Activated T-helper 1 cell treated with anti-CD3 and anti-CD28 coated beads, Interleukin-12 subunit alpha, Interleukin-12 subunit beta, Interleukin-2, Interleukin-4 antibody, amounts not matched to agents 30 ng/mL and 10 ng/mL and 1 ng/mL, durations not matched to agents 14 hours and 24 hours and 36 hours (primary cell): ENCODE measurements at regions of chr6 and their contacts with region 1.

Region 1: GRCh38 chr6:169701954-169702839 is at the starts of genes C6orf120 and WDR27:
- DNase-seq: peak; percentile 96
- H3K4me3 Mint-ChIP-seq: peak within 1 kb of the TSS; percentile 91
- H3K27ac Mint-ChIP-seq: peak within 1 kb of the TSS; percentile 91
- H3K4me1 Mint-ChIP-seq: peaks cover 46% of the 10 kb centered on the region
- H3K27me3 Mint-ChIP-seq: no peaks in the 10 kb centered on the region
- total RNA-seq, gene C6orf120: 22.6 and 25.5 TPM in 2 replicates
- total RNA-seq, gene WDR27: 20.1 and 26.8 TPM in 2 replicates

Region 2: DNA sequence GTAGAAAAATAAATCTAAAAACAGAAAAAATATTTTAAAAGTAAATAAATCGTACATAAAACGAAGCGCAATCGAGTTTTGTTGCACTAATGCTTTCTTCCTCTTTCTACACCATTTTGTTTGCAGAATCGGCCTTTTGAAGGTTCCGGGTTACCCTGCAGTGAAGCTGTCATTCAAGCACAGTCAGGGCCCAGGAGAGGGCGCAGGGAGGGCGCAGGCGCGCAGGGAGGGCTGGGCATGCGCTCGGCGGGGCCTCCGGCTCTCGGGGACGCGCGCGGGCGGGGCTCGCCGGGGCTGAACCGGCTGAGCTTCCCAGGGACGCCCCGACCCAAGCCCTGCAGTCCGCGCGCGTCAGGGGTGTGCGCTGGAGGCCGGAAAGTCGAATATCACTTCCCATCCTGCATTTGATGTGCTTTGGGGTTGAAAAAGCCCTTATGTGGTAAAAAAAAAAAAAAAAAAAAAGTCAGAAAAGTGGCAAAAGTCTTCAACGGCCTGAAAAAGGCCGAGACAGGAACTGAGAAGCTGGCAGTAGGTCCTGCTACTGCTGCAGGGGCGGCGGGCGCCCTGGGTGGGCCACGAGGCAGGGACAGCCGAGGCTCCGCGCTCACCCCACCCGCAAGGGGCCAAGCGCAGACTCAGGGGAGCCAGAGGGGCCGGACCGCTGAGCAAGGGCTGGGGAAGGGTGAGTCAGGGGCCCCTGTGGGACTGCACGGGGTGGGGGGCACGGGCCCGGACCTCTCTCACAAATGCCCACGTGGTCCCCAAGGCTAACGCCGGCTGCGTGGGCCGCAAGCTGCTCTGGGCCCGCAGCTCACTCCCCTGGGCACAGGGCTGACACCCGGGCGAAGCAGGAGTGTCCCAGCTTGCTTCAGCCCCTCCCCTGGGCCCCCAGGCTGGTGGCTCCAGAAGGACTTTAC is 489.0 kb before region 1 on chr6:
- intact Hi-C with region 1: loop called (anchors 1 kb)
- DNase-seq: peak; percentile 87
- H3K4me3 Mint-ChIP-seq: peak overlapping the region; percentile 43
- H3K27ac Mint-ChIP-seq: peak overlapping the region; percentile 32
- H3K4me1 Mint-ChIP-seq: peaks cover 7% of the 10 kb centered on the region
- H3K27me3 Mint-ChIP-seq: peaks cover 5% of the 10 kb centered on the region

Region 3: DNA sequence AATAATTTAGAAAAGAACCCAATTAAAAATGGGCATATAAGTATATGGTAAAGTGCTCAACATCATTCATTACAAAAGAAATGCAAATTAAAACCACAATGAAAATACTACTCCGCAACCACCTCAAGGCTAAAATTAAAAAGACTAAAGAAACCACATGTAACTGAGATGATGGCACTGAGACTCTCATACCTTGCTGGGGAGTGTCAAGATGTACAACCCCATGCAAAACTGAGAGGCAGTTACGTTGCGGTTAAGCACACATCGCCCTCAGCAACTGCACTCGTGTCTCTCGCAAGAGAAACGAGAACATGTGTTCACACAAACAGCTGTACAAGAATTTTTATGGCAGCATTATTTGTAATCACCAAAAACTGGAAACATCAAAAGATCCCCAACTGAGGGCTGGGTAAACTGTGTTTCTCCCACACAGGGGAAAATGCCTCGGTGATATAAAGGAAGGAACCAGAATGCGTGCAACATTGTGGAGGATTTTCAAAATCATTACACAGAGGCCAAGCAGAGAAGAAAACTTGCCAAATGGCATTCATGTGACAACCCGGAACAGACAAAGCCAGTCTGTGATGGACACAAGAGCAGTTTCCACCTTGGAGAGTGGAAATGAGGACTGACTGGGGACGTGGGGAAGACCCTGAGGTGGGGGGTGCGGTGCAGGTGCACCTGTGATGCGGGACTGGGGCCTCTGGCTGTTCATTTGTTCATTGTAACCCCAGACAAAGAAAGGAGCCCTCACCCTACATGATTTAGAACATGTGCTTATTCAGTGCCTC is 145.2 kb before region 1 on chr6:
- intact Hi-C with region 1: loop called (anchors 2 kb)
- DNase-seq: peak; percentile 13
- H3K4me3 Mint-ChIP-seq: peak overlapping the region; percentile 4
- H3K27ac Mint-ChIP-seq: peak overlapping the region; percentile 34
- H3K4me1 Mint-ChIP-seq: peaks cover 15% of the 10 kb centered on the region
- H3K27me3 Mint-ChIP-seq: peaks cover 20% of the 10 kb centered on the region

Region 4: GRCh38 chr6:169654598-169655391 is 47.4 kb before region 1 on chr6:
- intact Hi-C with region 1: loop called (anchors 1 kb)
- DNase-seq: peak; percentile 67
- H3K4me3 Mint-ChIP-seq: peak overlapping the region; percentile 87
- H3K27ac Mint-ChIP-seq: peak overlapping the region; percentile 44
- H3K4me1 Mint-ChIP-seq: no peaks in the 10 kb centered on the region
- H3K27me3 Mint-ChIP-seq: no peaks in the 10 kb centered on the region

Region 5: DNA sequence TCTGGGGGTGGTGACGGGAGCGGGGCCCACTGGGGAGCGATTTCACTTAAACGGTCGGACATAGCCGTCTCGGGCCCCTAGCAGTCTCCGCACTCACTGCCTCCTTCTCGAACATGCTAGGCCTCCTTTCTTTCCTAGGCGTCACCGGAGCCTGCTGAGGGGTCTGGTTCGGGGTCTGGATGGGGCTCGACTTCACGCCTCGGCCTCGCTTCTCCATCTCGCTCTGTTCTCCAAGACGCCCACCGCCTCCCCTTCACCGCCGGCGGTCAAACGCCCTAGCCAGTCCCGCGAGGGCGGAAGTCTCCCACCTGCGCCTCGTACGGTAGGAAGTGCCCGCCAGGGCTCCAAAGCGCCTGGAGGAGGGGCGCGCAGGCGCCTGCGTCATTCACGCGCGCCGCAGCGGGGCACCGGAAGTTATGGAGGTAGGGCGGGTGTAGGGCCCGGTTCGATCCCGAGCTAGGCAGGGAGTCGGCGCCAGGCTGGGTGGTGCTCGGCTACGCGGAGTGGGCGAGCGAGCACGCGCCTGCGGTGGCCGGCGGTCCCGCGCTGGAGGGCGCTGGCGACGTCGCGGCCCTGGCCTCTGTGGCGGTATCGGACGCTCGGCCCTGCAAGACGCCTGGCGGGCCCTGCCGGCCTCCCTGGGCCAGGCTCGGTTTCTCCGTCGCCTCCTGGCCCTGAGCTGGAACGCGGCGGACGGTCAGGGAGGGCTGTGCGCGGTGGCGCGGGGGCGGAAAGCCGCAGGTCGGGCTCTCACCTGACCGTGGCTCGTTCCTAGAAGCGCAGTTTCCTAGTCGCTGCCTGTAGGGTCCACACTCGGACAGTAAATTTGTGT is 49.3 kb after region 1 on chr6 and contains the starts of genes DYNLT2 and ERMARD:
- intact Hi-C with region 1: loop called (anchors 1 kb)
- DNase-seq: peak; percentile 93
- H3K4me3 Mint-ChIP-seq: peak within 1 kb of the TSS; percentile 99
- H3K27ac Mint-ChIP-seq: peak within 1 kb of the TSS; percentile 99
- H3K4me1 Mint-ChIP-seq: peaks cover 28% of the 10 kb centered on the region
- H3K27me3 Mint-ChIP-seq: peaks cover 4% of the 10 kb centered on the region
- total RNA-seq, gene DYNLT2: 2.2 and 2.6 TPM in 2 replicates
- total RNA-seq, gene ERMARD: 26.9 and 29.2 TPM in 2 replicates

Region 6: DNA sequence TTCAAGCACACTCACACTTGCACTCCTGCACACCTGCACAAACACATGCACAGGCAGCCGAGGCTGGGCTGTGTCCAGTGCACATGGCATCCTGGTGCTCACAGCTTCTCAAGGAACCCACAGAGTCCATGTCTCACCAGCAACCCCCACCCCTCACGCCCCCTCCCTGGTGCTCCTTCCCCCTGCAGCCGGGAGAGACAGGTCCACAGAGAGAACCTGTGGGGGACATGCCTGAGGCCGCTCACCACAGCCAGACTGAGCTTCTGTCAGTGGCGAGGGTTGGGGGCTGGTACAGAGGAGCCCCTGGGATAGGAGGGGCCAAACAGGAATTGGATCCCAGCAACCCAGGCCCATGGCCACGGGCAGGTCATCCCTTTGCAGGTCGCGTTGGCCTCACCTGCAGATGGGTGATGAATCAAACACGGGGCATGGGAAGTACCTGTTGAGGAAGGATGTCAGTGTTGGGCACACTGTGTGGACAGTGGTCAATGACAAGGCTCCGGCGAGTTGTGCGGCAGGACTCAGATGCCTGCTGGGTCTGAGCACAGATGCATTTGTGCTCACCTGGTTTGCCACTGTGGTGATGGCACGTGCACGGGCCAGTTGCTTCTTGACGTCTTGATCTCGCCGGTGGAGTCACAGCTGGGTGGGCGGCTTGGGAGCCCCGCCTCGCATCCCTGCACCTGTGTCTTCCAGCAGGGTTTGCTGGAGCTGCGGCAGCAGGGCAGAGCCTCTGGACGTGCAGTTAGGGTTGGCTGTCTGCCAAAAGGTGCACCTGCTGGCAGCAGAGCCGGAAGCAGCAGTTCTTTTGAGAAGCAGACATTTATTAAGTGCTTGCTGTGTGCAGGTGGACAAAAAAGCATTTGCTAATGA is 162.2 kb after region 1 on chr6:
- intact Hi-C with region 1: no loop called
- DNase-seq: no peak
- H3K4me3 Mint-ChIP-seq: no peak overlapping the region
- H3K27ac Mint-ChIP-seq: no peak overlapping the region
- H3K4me1 Mint-ChIP-seq: peaks cover 9% of the 10 kb centered on the region
- H3K27me3 Mint-ChIP-seq: no peaks in the 10 kb centered on the region

Region 7: GRCh38 chr6:170554013-170554795 is 852.0 kb after region 1 on chr6 and contains the start of gene TBP:
- intact Hi-C with region 1: loop called (anchors 1 kb)
- DNase-seq: peak; percentile 96
- H3K4me3 Mint-ChIP-seq: no peak within 1 kb of the TSS
- H3K27ac Mint-ChIP-seq: no peak within 1 kb of the TSS
- H3K4me1 Mint-ChIP-seq: peaks cover 34% of the 10 kb centered on the region
- H3K27me3 Mint-ChIP-seq: no peaks in the 10 kb centered on the region
- total RNA-seq, gene TBP: 27.8 and 29.6 TPM in 2 replicates